Left ventricle myocardium inferior (tissue), 1 donor: ENCODE measurements at regions of chr10 and their contacts with region 1.

Region 1: GRCh38 chr10:36519909-36520308 is 605.5 kb upstream of the ANKRD30A start:
- DNase-seq: no peak
- H3K4me3 ChIP-seq: no peak overlapping the region
- H3K27ac ChIP-seq: no peak overlapping the region
- H3K4me1 ChIP-seq: no peaks in the 10 kb centered on the region
- H3K27me3 ChIP-seq: no peaks in the 10 kb centered on the region
- CTCF ChIP-seq: no peak

Region 2: DNA sequence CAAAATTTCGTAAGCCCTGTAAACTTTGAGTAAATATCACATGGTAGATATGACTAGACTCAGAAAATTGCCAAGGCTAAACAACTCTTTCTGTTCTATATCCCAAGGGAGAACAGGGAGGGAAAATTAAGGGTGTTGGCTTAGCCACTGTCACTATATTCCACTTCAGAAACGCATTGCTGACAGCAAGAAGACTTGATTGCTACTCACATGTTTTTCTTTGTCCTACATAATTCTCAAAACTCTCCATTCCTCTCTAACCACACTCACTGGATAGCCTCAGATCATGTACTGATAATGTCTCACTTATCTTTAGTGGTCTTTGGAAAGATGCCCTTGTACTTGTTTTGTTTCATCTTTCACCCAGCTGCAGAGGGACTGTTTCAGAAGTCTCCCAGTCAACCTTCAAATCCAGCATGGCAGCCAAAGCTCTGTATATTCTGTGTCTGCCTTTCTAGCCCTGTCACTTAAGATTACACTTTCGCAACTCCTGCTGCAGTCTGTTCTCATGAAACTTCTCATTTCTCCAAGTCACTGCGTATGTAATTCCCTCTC is 295.4 kb before region 1 on chr10:
- intact Hi-C with region 1: no loop called
- DNase-seq: no peak
- H3K4me3 ChIP-seq: no peak overlapping the region
- H3K27ac ChIP-seq: no peak overlapping the region
- H3K4me1 ChIP-seq: no peaks in the 10 kb centered on the region
- H3K27me3 ChIP-seq: no peaks in the 10 kb centered on the region
- CTCF ChIP-seq: no peak

Region 3: DNA sequence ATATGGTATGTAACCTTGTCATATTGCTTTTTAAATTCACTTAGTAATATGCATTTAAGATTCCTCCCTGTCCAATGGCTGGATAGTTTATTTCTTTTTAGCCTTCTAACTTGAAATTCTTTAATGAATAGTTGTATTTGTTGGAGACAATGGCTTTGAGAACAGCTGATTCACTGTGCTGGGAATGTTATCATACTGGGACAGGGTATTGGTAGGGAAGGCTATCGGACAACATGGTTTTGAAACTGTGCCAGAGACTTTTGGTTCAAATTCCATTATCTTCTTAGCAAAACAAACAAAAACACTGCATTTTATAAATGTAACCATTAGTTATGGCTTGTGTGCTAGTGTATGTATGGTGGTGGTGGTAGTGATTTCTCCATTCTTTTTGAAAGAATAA is 88.3 kb after region 1 on chr10:
- intact Hi-C with region 1: loop called (anchors 5 kb)
- DNase-seq: no peak
- H3K4me3 ChIP-seq: no peak overlapping the region
- H3K27ac ChIP-seq: no peak overlapping the region
- H3K4me1 ChIP-seq: no peaks in the 10 kb centered on the region
- H3K27me3 ChIP-seq: no peaks in the 10 kb centered on the region
- CTCF ChIP-seq: no peak